ENCODE measurements at regions of chr7 and their contacts with region 1.

Region 1: DNA sequence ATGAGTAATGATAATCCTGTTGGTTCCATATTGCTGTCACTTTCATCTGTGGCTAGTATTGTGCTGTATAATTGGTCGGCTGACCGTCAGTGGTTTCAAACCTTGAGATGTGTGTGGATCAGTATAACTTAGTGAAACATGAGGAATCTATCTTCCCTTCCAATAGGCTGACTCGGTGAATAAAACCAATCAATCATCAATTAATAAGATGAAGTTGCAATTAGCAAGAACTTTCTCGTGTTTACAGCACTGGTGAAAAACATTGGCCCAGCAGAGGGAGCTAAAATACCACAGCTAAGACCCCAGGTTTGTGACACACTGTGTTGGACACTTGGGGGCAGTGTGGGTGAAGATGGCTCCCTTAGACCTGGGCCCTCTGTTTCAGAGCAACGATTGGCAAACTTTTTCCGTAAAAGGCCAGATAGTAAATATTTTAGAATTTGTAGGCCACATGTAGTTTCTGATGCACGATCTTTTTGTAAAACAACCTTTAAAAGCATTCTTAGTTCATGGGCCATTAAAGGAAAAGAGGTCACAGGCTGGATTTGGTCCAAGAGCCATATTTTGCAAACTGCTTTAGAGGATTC is 47.8 kb downstream of the STRA8 start:
- DNase-seq: peak; percentile 48
- ATAC-seq: peak; percentile 100
- H3K4me3 ChIP-seq: no peak overlapping the region
- H3K27ac ChIP-seq: no peak overlapping the region
- H3K4me1 ChIP-seq: no peaks in the 10 kb centered on the region
- H3K27me3 ChIP-seq: no peaks in the 10 kb centered on the region
- CTCF ChIP-seq: peak; percentile 90 to 99 (median 99)
- EP300 ChIP-seq: no peak
- POLR2A ChIP-seq: no peak
- RAD21 ChIP-seq: peak; percentile 97

Region 2: DNA sequence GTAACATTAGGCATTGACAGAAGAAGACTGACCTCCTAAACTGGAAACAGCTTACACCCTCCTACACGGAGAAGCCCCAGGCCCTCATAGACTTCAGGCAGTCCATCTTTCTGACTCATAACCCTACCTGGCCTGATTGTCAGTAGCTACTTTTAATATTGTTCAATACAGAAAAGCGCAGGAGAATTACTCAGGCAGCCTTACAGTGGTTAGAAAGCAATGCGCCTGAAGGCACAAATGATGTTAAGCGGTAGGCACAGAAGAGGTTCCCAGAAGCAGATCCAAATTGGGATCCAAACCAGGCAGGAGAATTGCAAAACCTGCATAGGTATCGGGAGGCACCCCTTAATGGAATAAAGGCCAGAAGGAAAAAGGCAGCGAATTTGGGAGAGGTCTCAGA is 105.5 kb before region 1 on chr7:
- CTCF ChIA-PET with region 1: interaction called, 11 read pairs
- POLR2A ChIA-PET with region 1: no interaction called
- RAD21 ChIA-PET with region 1: no interaction called
- SMC1A ChIA-PET with region 1: interaction called, 4 read pairs
- in situ Hi-C with region 1: no loop called
- intact Hi-C with region 1: no loop called
- DNase-seq: no peak
- ATAC-seq: no peak; the same call in 2 of the 3 replicates
- H3K4me3 ChIP-seq: peak overlapping the region; percentile 51
- H3K27ac ChIP-seq: no peak overlapping the region
- H3K4me1 ChIP-seq: peaks cover 5% of the 10 kb centered on the region
- H3K27me3 ChIP-seq: no peaks in the 10 kb centered on the region
- CTCF ChIP-seq: no peak
- EP300 ChIP-seq: no peak
- POLR2A ChIP-seq: no peak
- RAD21 ChIP-seq: no peak

Region 3: GRCh38 chr7:135253898-135254771 is 27.3 kb before region 1 on chr7:
- CTCF ChIA-PET with region 1: interaction called, 13 read pairs
- POLR2A ChIA-PET with region 1: no interaction called
- RAD21 ChIA-PET with region 1: no interaction called
- SMC1A ChIA-PET with region 1: interaction called, 4 read pairs
- in situ Hi-C with region 1: no loop called
- intact Hi-C with region 1: no loop called
- DNase-seq: no peak
- ATAC-seq: no peak
- H3K4me3 ChIP-seq: no peak overlapping the region
- H3K27ac ChIP-seq: no peak overlapping the region
- H3K4me1 ChIP-seq: peaks cover 9% of the 10 kb centered on the region; the same call in 1 of the 2 replicates
- H3K27me3 ChIP-seq: no peaks in the 10 kb centered on the region
- CTCF ChIP-seq: no peak
- EP300 ChIP-seq: no peak
- POLR2A ChIP-seq: no peak
- RAD21 ChIP-seq: no peak

Region 4: DNA sequence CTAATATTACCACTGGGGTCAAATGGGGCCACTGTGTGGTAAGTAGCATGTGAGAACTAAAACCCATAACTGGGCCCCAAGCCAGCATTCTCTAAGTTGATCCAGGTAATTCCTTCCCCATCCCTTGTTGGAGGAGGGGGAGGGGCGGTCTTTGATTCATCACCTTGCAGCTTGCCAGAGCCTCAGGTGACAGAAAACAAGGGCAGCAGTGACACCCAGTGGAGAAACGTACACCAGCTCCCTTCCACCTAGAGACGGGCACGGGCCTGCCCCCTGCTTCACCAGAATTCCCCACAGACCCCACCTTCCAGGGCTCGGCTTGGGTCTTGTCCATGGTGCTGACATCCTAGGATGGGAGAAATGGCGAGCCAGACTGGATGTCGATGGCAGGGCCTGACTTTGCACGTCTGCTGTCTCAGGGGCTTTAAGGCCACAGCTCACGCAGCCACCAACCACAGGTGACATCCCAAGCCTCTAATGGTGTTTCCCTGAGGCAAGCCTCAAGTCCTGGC is 54.2 kb after region 1 on chr7:
- CTCF ChIA-PET with region 1: interaction called, 105 read pairs
- POLR2A ChIA-PET with region 1: no interaction called
- RAD21 ChIA-PET with region 1: interaction called, 36 read pairs
- SMC1A ChIA-PET with region 1: interaction called, 47 read pairs
- in situ Hi-C with region 1: no loop called
- intact Hi-C with region 1: loop called (anchors 1 kb)
- DNase-seq: peak; percentile 20
- ATAC-seq: peak; percentile 96
- H3K4me3 ChIP-seq: no peak overlapping the region
- H3K27ac ChIP-seq: no peak overlapping the region
- H3K4me1 ChIP-seq: no peaks in the 10 kb centered on the region
- H3K27me3 ChIP-seq: no peaks in the 10 kb centered on the region; a peak in 1 of 4 replicates
- CTCF ChIP-seq: peak; percentile 46 to 75 (median 64); a peak in 5 of 6 replicates
- EP300 ChIP-seq: no peak
- POLR2A ChIP-seq: no peak
- RAD21 ChIP-seq: peak; percentile 73

Region 5: GRCh38 chr7:135509903-135510602 is 228.6 kb after region 1 on chr7 and contains the start of gene CNOT4:
- CTCF ChIA-PET with region 1: interaction called, 10 read pairs
- POLR2A ChIA-PET with region 1: no interaction called
- RAD21 ChIA-PET with region 1: no interaction called
- SMC1A ChIA-PET with region 1: interaction called, 4 read pairs
- in situ Hi-C with region 1: no loop called
- intact Hi-C with region 1: loop called (anchors 2 kb)
- DNase-seq: peak; percentile 82
- ATAC-seq: peak; percentile 93
- H3K4me3 ChIP-seq: peak within 1 kb of the TSS; percentile 94
- H3K27ac ChIP-seq: peak within 1 kb of the TSS; percentile 97
- H3K4me1 ChIP-seq: no peaks in the 10 kb centered on the region
- H3K27me3 ChIP-seq: no peaks in the 10 kb centered on the region
- CTCF ChIP-seq: no peak
- EP300 ChIP-seq: no peak
- POLR2A ChIP-seq: peak; percentile 89
- RAD21 ChIP-seq: no peak
- polyA plus RNA-seq, gene CNOT4: 11.3 to 29.6 TPM

Region 6: GRCh38 chr7:135672560-135673359 is 391.3 kb after region 1 on chr7:
- CTCF ChIA-PET with region 1: interaction called, 30 read pairs
- POLR2A ChIA-PET with region 1: no interaction called
- RAD21 ChIA-PET with region 1: no interaction called
- SMC1A ChIA-PET with region 1: interaction called, 3 read pairs
- in situ Hi-C with region 1: no loop called
- intact Hi-C with region 1: no loop called
- DNase-seq: no peak
- ATAC-seq: peak; percentile 91
- H3K4me3 ChIP-seq: no peak overlapping the region
- H3K27ac ChIP-seq: no peak overlapping the region
- H3K4me1 ChIP-seq: no peaks in the 10 kb centered on the region; the same call in 1 of the 2 replicates
- H3K27me3 ChIP-seq: no peaks in the 10 kb centered on the region
- CTCF ChIP-seq: peak; percentile 65 to 82 (median 68)
- EP300 ChIP-seq: no peak
- POLR2A ChIP-seq: no peak
- RAD21 ChIP-seq: peak; percentile 71

Measured in GM12878 (cell line).